ENCODE measurements at regions of chr1 and their contacts with region 1.

Region 1: GRCh38 chr1:192580351-192580962 is 4.9 kb downstream of the RGS1 start:
- DNase-seq: peak in 1 of 2 experiments; percentile 9
- H3K4me3 ChIP-seq: no peak overlapping the region
- H3K4me3 Mint-ChIP-seq: no peak overlapping the region
- H3K27ac Mint-ChIP-seq: no peak overlapping the region
- H3K4me1 ChIP-seq: no peaks in the 10 kb centered on the region
- H3K4me1 Mint-ChIP-seq: no peaks in the 10 kb centered on the region
- H3K27me3 ChIP-seq: no peaks in the 10 kb centered on the region
- H3K27me3 Mint-ChIP-seq: no peaks in the 10 kb centered on the region
- CTCF ChIP-seq: peak; percentile 25 to 35

Region 2: DNA sequence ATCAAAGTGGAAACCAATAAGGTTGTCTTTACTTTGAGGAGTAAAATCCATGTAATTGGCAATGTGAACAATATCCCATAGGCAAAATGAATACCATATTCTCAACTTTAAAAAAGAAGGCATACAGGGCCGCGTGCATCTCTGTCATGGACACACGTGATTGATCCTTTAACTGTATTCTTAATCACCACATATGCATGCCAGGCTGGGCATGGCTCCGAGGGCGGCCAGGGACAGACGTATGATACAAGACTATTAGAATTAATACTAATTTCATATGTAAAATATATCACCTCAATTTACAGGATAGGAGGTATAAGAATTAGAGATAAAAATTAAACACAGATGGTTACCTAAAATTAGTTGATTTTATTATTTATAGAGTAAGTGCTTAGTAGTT is 252.5 kb before region 1 on chr1:
- CTCF ChIA-PET with region 1: no interaction called
- POLR2A ChIA-PET with region 1: no interaction called
- intact Hi-C with region 1: no loop called
- DNase-seq: no peak
- H3K4me3 ChIP-seq: no peak overlapping the region
- H3K4me3 Mint-ChIP-seq: no peak overlapping the region
- H3K27ac Mint-ChIP-seq: no peak overlapping the region
- H3K4me1 ChIP-seq: no peaks in the 10 kb centered on the region
- H3K4me1 Mint-ChIP-seq: no peaks in the 10 kb centered on the region
- H3K27me3 ChIP-seq: no peaks in the 10 kb centered on the region
- H3K27me3 Mint-ChIP-seq: no peaks in the 10 kb centered on the region
- CTCF ChIP-seq: no peak

Region 3: GRCh38 chr1:192477630-192478029 is 102.8 kb before region 1 on chr1:
- CTCF ChIA-PET with region 1: no interaction called
- POLR2A ChIA-PET with region 1: no interaction called
- intact Hi-C with region 1: loop called (anchors 1 kb)
- DNase-seq: no peak
- H3K4me3 ChIP-seq: no peak overlapping the region
- H3K4me3 Mint-ChIP-seq: no peak overlapping the region
- H3K27ac Mint-ChIP-seq: no peak overlapping the region
- H3K4me1 ChIP-seq: no peaks in the 10 kb centered on the region
- H3K4me1 Mint-ChIP-seq: no peaks in the 10 kb centered on the region
- H3K27me3 ChIP-seq: no peaks in the 10 kb centered on the region
- H3K27me3 Mint-ChIP-seq: no peaks in the 10 kb centered on the region
- CTCF ChIP-seq: peak in 1 of 2 experiments; percentile 13

Region 4: GRCh38 chr1:192506741-192507155 is 73.7 kb before region 1 on chr1:
- CTCF ChIA-PET with region 1: no interaction called
- POLR2A ChIA-PET with region 1: no interaction called
- intact Hi-C with region 1: loop called (anchors 2 kb)
- DNase-seq: peak in 1 of 2 experiments; percentile 20
- H3K4me3 ChIP-seq: no peak overlapping the region
- H3K4me3 Mint-ChIP-seq: no peak overlapping the region
- H3K27ac Mint-ChIP-seq: no peak overlapping the region
- H3K4me1 ChIP-seq: no peaks in the 10 kb centered on the region
- H3K4me1 Mint-ChIP-seq: no peaks in the 10 kb centered on the region
- H3K27me3 ChIP-seq: no peaks in the 10 kb centered on the region
- H3K27me3 Mint-ChIP-seq: peaks cover 6% of the 10 kb centered on the region
- CTCF ChIP-seq: peak; percentile 14 to 43

Region 5: DNA sequence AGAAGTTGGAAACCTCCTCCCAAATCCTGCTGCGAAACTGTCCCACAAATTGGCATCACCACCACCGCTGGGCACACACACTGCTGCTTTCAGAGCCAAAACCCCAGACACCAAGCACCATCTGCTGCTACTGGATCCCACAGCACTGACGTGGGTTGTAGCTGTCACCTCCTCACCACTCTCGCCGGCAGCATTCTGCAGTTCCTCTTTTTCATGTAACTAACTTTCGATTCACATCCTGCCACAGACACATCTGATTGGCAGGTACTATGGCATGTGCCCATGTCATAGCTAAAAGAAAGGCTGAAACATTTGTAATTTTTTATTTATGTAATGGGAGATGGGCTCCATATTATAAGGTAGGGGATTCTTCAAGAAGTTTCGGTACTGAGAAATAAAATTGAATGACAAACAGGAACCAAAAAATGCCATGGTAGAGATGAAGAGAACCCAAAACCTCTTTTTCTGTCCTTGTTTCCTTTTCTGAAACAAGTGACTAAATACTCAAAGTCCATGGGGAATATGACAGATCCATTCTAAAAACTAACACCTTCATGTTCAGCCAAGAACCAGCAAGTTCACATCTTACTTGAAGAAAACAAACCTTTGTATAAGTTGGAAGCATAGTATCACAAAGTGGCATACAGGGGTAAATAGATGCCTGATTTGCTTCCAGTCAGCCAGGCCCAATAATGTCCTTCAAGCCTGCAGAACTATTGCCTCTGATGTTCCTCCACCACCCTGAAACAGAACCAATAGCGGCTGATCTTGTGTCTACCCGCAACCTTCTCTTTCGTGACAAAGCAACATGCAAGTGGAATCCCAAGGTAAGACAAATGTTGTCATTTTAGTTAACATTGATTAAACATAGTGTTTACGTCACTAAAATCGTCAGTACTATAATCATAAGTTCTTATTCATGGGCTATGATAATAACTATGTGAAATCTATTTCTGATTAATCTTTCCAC is 28.9 kb after region 1 on chr1:
- CTCF ChIA-PET with region 1: no interaction called
- POLR2A ChIA-PET with region 1: no interaction called
- intact Hi-C with region 1: loop called (anchors 2 kb)
- DNase-seq: no peak
- H3K4me3 ChIP-seq: no peak overlapping the region
- H3K4me3 Mint-ChIP-seq: no peak overlapping the region
- H3K27ac Mint-ChIP-seq: no peak overlapping the region
- H3K4me1 ChIP-seq: no peaks in the 10 kb centered on the region
- H3K4me1 Mint-ChIP-seq: no peaks in the 10 kb centered on the region
- H3K27me3 ChIP-seq: no peaks in the 10 kb centered on the region
- H3K27me3 Mint-ChIP-seq: peaks cover 2% of the 10 kb centered on the region
- CTCF ChIP-seq: no peak

Measured in Caco-2 (cell line).